GM12878 (cell line): ENCODE measurements at regions of chr2 and their contacts with region 1.

Region 1: DNA sequence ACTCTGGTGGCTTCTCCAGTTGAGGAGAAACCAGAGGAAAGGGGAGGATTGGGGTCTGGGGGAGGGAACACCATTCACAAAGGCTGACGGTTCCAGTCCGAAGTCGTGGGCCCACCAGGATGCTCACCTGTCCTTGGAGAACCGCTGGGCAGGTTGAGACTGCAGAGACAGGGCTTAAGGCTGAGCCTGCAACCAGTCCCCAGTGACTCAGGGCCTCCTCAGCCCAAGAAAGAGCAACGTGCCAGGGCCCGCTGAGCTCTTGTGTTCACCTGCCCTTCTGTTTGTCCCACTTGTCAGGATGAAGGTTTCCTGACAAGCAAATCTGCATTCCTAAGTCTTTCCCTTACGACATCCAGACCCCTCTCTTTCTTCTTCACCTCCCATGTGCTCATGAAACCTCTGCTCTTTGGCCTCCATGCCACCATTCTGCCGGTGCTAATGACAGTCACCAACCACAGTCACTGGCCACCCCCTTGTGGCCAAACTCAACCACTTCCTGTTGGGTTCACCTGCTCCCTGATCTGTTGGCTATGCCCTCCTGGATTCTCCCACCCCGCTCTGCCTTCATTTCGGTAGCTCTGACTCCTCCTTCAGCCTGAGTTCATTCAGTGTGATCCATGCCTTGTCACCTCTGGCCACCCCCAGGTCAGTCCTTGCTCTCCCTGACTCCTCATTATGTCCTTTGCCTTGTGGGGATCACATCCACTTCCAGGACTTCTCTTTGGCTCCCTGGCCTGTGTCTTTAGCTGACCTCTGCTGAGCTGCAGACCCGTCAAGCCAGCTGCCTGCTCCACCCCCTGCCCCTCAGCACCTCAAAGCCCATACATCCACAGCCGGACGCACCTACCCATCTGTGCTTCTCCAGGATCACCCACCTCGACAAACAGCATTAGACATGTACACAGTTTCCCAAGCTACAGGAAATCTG is 17.6 kb downstream of the EMX1 start:
- DNase-seq: no peak
- ATAC-seq: peak; percentile 88
- H3K4me3 ChIP-seq: no peak overlapping the region
- H3K27ac ChIP-seq: no peak overlapping the region
- H3K4me1 ChIP-seq: no peaks in the 10 kb centered on the region; the same call in 1 of the 2 replicates
- H3K27me3 ChIP-seq: no peaks in the 10 kb centered on the region; a peak in 1 of 4 replicates
- CTCF ChIP-seq: peak; percentile 38 to 63 (median 40); a peak in 5 of 6 replicates
- EP300 ChIP-seq: no peak
- POLR2A ChIP-seq: no peak
- RAD21 ChIP-seq: peak; percentile 67

Region 2: DNA sequence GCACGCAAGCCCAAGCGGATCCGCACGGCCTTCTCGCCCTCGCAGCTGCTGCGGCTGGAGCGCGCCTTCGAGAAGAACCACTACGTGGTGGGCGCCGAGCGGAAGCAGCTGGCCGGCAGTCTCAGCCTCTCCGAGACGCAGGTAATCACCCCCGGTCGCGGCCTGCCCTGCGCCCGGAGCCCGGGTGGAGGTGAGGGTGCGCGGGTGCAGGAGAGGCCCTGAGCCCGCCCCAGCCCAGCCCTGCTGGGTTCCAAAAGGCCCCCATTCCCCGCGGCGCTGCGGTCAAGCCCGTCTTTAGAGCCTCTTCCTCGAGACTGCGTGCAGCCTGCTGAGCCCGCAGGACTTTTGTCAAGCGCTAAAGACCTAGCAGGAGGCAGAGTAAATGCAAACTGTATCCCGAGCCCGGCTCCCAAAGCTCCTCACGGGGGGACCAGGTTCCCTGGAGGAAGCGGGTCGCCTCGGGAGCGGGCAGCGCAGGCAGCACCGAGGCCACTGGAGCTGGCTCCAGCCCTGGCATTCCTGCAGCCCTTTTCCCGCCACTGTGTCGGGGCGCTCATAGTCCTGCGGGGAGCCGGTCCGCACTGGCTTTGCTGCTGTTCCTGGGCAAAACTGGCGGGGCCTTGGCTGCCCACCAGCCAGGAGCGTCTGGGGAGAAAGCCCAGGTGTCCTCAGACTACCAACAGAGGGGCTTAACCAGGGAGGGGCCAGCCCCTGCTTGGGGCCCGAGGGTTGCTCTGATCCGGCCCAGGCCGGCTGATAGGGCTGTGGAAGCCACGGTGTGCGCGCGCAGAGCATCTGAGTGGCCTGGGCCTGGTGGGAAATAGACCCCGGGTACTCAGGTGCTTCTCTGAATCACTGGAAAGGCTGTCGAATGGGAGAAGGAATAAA is 10.3 kb before region 1 on chr2:
- CTCF ChIA-PET with region 1: interaction called, 6 read pairs
- POLR2A ChIA-PET with region 1: no interaction called
- RAD21 ChIA-PET with region 1: no interaction called
- SMC1A ChIA-PET with region 1: interaction called, 12 read pairs
- in situ Hi-C with region 1: no loop called
- intact Hi-C with region 1: no loop called
- DNase-seq: no peak
- ATAC-seq: peak; percentile 62
- H3K4me3 ChIP-seq: no peak overlapping the region
- H3K27ac ChIP-seq: no peak overlapping the region
- H3K4me1 ChIP-seq: no peaks in the 10 kb centered on the region; the same call in 1 of the 2 replicates
- H3K27me3 ChIP-seq: peaks cover 7 to 43% of the 10 kb centered on the region in 2 experiments
- CTCF ChIP-seq: no peak
- EP300 ChIP-seq: peak in 1 of 2 experiments; percentile 31; a peak in 1 of 4 replicates
- POLR2A ChIP-seq: no peak
- RAD21 ChIP-seq: no peak